Dendritic cell treated with granulocyte-macrophage colony-stimulating factor and Interleukin-4, amounts not matched to agents 40 ng/mL and 50 ng/mL, for 4 days (primary cell): ENCODE measurements at regions of chr9 and their contacts with region 1.

Region 1: GRCh38 chr9:101311758-101312420 is 72.9 kb downstream of the BAAT start:
- H3K4me3 Mint-ChIP-seq: no peak overlapping the region
- H3K27ac Mint-ChIP-seq: no peak overlapping the region
- H3K4me1 Mint-ChIP-seq: no peaks in the 10 kb centered on the region
- H3K27me3 Mint-ChIP-seq: peaks cover 3% of the 10 kb centered on the region

Region 2: DNA sequence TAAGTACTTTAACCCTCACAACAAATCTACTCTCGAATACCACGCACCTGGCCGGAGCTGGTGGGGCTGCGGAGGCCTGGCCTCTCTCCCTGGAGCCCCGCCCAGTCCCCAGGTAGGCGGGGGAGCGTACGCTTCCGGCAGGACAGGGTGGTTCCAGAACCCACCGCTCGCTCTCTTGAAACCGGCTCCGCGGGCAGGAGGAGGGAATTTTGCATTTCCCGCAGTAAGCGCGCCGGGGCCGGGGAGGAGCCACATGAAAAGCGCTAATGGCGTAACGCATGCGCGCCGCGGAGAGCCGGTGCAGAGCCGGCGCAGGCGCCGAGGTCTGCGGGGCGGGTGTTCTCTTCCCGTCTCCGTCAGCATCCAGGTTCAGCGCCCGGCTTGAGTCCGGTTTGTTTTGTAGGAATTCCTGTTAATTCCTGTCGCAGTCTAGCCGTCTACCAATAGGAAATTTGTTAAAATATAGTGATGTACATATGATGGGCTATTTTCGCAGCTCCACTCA is 713.2 kb before region 1 on chr9:
- intact Hi-C with region 1: loop called (anchors 2 kb)
- H3K4me3 Mint-ChIP-seq: peak overlapping the region; percentile 74
- H3K27ac Mint-ChIP-seq: peak overlapping the region; percentile 28
- H3K4me1 Mint-ChIP-seq: peaks cover 18% of the 10 kb centered on the region
- H3K27me3 Mint-ChIP-seq: peaks cover 28% of the 10 kb centered on the region

Region 3: GRCh38 chr9:100714372-100715099 is 597.4 kb before region 1 on chr9:
- intact Hi-C with region 1: loop called (anchors 1 kb)
- H3K4me3 Mint-ChIP-seq: no peak overlapping the region
- H3K27ac Mint-ChIP-seq: no peak overlapping the region
- H3K4me1 Mint-ChIP-seq: no peaks in the 10 kb centered on the region
- H3K27me3 Mint-ChIP-seq: no peaks in the 10 kb centered on the region

Region 4: DNA sequence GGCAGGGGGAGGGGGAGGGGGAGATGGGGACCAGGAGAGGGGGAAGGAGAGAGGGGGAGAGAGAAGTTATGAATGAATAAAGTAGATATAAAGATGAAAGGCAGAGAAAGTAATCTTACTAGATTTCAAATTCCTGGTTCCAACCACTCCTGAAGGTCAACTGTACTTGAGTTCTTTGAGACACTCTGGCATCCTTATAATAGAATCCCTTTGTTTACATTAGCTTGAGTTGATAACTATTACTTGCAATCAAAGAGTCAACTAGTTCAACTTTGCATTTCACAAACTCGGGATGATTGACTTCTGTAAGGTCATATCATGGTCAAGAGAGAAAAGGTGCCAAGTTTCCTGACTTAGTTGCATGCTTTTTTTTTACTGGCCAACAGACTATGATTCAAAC is 30.7 kb after region 1 on chr9:
- intact Hi-C with region 1: no loop called
- H3K4me3 Mint-ChIP-seq: no peak overlapping the region
- H3K27ac Mint-ChIP-seq: no peak overlapping the region
- H3K4me1 Mint-ChIP-seq: no peaks in the 10 kb centered on the region
- H3K27me3 Mint-ChIP-seq: no peaks in the 10 kb centered on the region